Ascending aorta (tissue), 2 donors: ENCODE measurements at regions of chr1 and their contacts with region 1.

Region 1: DNA sequence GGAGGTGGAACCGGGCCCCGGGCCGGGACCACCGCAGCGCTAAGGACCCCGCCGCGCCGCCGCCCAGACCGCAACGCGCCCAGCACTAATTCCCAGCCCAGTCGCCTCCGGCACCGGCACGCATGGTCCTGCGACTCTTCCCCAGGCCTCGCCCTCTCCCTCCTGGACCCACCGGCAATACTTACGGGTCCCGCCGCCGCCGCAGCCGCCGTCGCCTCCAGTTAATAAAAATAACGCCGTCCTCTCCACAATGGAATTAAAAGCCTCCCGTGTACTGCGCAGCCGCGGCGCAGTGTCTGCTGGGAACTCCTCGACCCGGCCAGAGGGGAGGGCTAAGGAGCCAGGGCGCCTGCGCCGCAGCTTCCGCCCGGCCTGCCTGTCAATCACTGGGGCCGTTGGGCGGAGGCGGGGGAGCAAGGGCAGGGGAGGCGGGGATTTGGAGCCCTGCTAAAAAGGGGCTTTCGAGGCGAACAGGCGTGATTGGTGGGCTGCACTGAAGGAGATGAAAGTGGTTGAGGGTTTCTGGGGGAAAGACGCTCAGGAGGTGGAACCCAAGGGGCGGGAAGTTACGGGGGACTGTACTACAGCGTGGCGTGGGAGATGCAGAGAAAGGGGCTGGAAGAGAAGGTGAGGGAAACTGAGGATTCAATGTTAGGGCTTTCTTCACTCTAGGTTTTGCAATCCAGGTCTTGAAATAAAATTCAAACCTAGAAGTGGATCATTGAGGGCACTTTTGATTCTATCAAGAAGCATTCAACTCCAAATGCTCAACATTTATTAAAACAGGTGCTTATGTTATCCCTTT is at the start of gene ZNF281:
- DNase-seq: peak; percentile 80 to 96
- H3K4me3 ChIP-seq: peak within 1 kb of the TSS; percentile 81 to 84
- H3K27ac ChIP-seq: peak within 1 kb of the TSS; percentile 76 to 87
- H3K4me1 ChIP-seq: peaks cover 15 to 24% of the 10 kb centered on the region in 2 donors
- H3K27me3 ChIP-seq: no peaks in the 10 kb centered on the region
- CTCF ChIP-seq: no peak
- total RNA-seq, gene ZNF281: 3.7 TPM

Region 2: GRCh38 chr1:200392625-200393185 is 17.3 kb before region 1 on chr1:
- intact Hi-C with region 1: no loop called
- DNase-seq: no peak
- H3K4me3 ChIP-seq: no peak overlapping the region
- H3K27ac ChIP-seq: no peak overlapping the region
- H3K4me1 ChIP-seq: no peaks in the 10 kb centered on the region
- H3K27me3 ChIP-seq: no peaks in the 10 kb centered on the region
- CTCF ChIP-seq: no peak

Region 3: DNA sequence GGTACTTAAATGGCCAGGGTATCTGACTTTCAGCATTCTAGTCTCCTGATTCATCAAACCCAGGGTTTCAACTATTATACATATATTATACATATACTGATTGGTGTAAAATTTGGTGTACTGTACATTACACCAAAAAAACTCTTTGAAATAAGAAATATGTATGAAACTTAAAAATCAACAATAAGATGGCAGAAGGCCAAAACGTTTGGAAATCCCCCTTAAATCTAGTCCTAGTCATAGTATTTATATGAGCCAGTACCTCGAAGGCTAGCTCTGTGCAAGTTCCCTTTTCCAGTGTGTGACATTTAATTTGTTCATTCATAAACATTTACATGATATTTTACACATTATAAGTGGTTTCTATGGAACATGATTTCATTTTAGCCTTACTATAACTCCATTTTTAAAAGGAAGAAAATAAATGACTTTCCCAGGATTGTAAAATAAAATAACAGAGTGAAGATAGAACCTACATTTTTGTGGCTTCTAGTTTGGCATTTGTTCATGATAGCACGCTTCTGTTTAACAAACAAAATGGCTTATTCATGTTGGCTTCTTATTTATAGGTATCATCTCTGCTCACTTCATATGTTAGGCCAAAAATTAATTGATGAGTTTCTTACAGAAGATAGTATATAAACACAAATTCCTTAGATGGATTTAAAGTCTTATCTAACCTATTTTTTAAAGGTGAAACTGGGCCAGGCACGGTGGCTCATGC is 18.7 kb after region 1 on chr1:
- intact Hi-C with region 1: loop called (anchors 1 kb)
- DNase-seq: no peak
- H3K4me3 ChIP-seq: no peak overlapping the region
- H3K27ac ChIP-seq: peak overlapping the region; percentile 59 to 61
- H3K4me1 ChIP-seq: no peaks in the 10 kb centered on the region
- H3K27me3 ChIP-seq: no peaks in the 10 kb centered on the region
- CTCF ChIP-seq: no peak

Region 4: DNA sequence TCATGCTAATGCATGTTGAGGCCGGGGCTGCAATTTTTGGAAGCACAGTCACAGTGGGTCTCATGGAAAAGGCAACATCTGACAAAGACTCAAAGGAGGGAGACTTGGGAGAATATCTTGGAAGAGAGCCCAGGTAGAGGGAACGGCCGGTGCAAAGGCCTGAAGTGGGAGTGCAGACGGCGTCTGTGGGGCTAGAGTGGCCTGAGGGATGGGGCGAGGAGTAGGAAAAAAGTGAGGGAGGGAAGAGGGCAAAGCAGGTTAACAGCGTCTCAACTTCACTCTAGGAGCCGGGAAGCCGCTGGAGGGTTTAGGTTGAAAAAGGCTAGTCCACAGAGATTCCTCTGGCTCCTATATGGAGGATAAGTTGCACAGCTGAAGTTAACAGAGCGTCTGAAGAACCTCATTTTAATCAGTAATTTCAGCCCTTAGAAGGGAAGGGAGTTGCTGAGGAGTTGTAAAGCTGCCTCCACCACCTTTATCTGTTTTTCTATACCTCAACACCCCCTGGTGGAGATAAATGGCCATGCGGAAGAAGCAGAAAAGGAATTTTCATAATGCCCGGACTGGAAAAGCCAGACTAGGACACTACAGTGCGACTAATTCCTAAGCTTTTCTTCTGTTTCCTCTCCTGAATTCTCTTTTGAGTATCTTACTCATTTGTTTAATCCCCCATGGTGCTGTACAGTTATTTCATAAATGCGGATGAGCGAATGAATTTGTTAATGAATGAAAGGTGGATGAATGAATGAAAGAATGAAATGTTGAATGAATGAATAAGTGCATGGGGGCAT is 78.6 kb after region 1 on chr1:
- intact Hi-C with region 1: loop called (anchors 1 kb)
- DNase-seq: no peak
- H3K4me3 ChIP-seq: no peak overlapping the region
- H3K27ac ChIP-seq: no peak overlapping the region
- H3K4me1 ChIP-seq: no peaks in the 10 kb centered on the region
- H3K27me3 ChIP-seq: no peaks in the 10 kb centered on the region
- CTCF ChIP-seq: peak; percentile 57 to 76 (median 62)

Region 5: DNA sequence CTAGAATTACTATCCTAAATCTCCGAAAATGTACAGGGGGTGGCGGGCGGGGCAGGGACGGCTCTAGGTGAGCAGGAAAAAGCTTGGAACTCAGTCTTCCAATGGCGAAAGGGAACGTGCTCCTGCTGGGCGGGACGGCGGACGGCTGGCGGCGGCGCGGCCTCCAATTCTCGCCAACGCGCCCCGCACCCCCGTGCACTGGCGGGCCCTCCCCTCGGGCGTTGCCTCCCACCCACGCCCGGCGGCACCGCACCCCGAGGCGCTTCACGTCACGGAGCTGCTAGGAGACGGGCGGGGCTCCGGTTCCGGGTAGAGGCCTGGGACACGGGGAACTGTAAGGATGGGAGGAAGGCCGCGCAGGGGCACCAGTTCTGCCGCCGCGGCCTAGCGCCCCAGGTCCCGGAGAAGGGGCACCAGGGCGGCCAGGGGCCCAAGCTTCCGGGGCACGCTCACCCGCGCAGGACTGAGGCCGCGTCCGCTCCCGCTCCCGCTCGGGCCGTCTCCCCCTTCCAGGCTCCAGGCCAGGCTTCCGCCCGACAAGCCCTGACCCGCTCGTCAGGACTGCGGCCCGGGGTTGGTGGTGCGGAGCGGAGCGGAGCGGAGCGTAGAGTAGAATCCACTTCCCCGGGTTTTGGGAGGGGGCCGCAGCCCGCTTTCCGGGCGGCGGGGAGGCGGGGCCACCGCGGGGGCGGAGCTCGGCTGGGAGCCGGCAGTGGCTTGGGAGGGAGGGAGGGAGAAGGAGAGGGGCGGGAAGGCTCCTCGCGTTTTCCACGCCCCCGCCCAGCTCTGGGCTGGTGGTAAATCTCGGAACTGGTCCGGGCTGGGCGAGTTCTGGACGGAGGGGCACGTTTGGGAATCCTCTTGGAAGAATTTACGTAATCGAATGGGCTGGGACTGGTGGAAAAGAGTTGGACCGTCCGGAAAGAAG is 259.6 kb after region 1 on chr1 and contains the start of gene DDX59:
- intact Hi-C with region 1: loop called (anchors 5 kb)
- DNase-seq: peak; percentile 88 to 98
- H3K4me3 ChIP-seq: peak within 1 kb of the TSS; percentile 72 to 81
- H3K27ac ChIP-seq: peak within 1 kb of the TSS; percentile 95 to 99
- H3K4me1 ChIP-seq: peaks cover 0 to 28% of the 10 kb centered on the region in 2 donors
- H3K27me3 ChIP-seq: no peaks in the 10 kb centered on the region
- CTCF ChIP-seq: no peak
- total RNA-seq, gene DDX59: 7.6 TPM